ENCODE measurements at regions of chr21 and their contacts with region 1.

Region 1: GRCh38 chr21:41879190-41879998 is at the start of gene PRDM15:
- DNase-seq: peak; percentile 55
- ATAC-seq: peak; percentile 68
- H3K4me3 ChIP-seq: peak within 1 kb of the TSS; percentile 86 to 90 (median 86)
- H3K27ac ChIP-seq: peak within 1 kb of the TSS; percentile 80
- H3K4me1 ChIP-seq: peaks cover 37% of the 10 kb centered on the region
- H3K27me3 ChIP-seq: no peaks in the 10 kb centered on the region; a peak in 1 of 5 replicates
- CTCF ChIP-seq: no peak
- EP300 ChIP-seq: no peak
- POLR2A ChIP-seq: peak in 1 of 2 experiments; percentile 37; a peak in 1 of 4 replicates
- RAD21 ChIP-seq: no peak; the same call in 1 of the 2 replicates
- total RNA-seq, gene PRDM15: 4.0 and 4.2 TPM in 2 replicates

Region 2: DNA sequence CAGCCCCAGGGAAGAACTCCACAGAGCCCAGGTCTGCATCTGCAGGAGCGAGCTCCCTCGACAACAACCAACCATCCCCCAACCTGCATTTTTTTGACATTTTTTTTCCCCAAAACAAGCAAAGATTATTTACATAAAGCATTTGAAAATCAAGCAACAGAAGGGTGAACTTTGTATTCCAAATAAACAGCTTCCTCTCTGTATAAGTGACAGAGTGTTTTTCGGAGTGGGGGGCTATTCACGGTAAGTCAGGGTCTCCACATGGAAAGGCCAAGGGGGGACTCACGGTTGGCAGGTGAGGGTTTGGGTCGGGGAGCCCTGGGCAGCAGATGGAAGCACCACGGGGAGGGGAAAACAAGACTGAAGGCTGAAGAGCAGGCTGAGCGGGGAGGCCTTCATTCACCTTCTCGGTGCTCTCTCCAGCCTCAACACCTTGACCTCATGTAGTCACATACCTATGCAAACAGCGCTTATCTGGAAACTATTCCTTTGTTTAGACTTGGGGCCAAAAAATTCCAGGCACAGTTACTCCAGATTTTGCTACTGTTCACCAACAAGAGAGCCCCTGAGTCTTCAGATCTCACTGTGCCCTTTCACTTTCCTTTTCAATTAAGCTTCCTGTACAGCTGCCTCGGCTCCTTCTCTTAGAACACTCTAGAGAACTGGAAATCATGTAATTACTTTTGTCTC is 46.9 kb after region 1 on chr21:
- CTCF ChIA-PET with region 1: no interaction called
- POLR2A ChIA-PET with region 1: interaction called, 16 read pairs
- in situ Hi-C with region 1: no loop called
- intact Hi-C with region 1: no loop called
- DNase-seq: peak; percentile 60
- ATAC-seq: peak; percentile 87
- H3K4me3 ChIP-seq: peak overlapping the region; percentile 41 to 71 (median 65)
- H3K27ac ChIP-seq: peak overlapping the region; percentile 94
- H3K4me1 ChIP-seq: peaks cover 56% of the 10 kb centered on the region
- H3K27me3 ChIP-seq: no peaks in the 10 kb centered on the region
- CTCF ChIP-seq: no peak
- EP300 ChIP-seq: peak in 1 of 2 experiments; percentile 60; a peak in 2 of 4 replicates
- POLR2A ChIP-seq: peak in 1 of 2 experiments; percentile 25; a peak in 1 of 4 replicates
- RAD21 ChIP-seq: no peak

Region 3: GRCh38 chr21:42063571-42064521 is 184.5 kb after region 1 on chr21:
- CTCF ChIA-PET with region 1: no interaction called
- POLR2A ChIA-PET with region 1: no interaction called
- in situ Hi-C with region 1: no loop called
- intact Hi-C with region 1: no loop called
- DNase-seq: no peak
- ATAC-seq: peak; percentile 12; the same call in 2 of the 3 replicates
- H3K4me3 ChIP-seq: no peak overlapping the region
- H3K27ac ChIP-seq: no peak overlapping the region
- H3K4me1 ChIP-seq: peaks cover 22% of the 10 kb centered on the region; the same call in 1 of the 2 replicates
- H3K27me3 ChIP-seq: peaks cover 17 to 74% of the 10 kb centered on the region in 2 experiments; a peak in 4 of 5 replicates
- CTCF ChIP-seq: no peak
- EP300 ChIP-seq: no peak
- POLR2A ChIP-seq: no peak
- RAD21 ChIP-seq: no peak